ENCODE measurements at regions of chr7 and their contacts with region 1.

Region 1: DNA sequence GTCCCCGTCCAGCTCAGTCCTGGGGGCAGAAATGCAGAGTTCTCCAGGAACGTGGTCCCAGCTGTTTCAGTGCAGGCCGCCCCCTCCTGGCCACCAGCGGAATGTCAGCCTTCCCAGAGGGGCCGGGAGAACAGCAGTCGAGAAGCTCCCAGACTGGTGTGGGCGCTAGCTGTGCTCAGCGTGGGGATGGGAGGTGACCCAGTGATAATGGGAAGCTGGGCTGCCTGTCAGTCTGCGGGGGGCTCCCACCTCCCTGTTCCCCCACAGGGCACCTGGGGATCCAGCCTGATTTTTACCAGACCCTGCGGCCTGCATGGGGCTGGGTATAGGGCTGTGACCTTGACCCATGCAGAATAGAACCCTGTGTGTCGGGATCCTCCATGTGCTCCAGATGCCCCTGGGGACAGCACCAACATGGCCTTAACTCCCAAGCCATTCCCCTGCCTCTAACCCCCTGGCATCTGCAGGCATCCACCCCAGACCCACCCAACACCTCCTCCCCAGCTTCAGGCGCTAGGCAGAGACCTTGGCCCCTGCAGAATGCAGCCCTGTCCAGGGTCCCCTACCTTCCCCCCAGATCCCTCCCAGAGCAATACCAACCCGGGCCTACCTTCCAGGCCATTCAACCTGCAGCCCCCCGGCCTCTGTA is 946 bp upstream of the ELN start:
- DNase-seq: peak; percentile 54 to 75
- ATAC-seq: peak; percentile 60 to 88
- H3K4me3 ChIP-seq: no peak overlapping the region
- H3K27ac ChIP-seq: peak overlapping the region; percentile 36 to 46; a peak in 2 of 6 replicates
- H3K4me1 ChIP-seq: peaks cover 40% of the 10 kb centered on the region
- CTCF ChIP-seq: peak; percentile 78
- EP300 ChIP-seq: no peak
- POLR2A ChIP-seq: no peak
- RAD21 ChIP-seq: peak; percentile 77 to 81

Region 2: GRCh38 chr7:73312831-73313526 is 714.0 kb before region 1 on chr7:
- CTCF ChIA-PET with region 1: no interaction called
- POLR2A ChIA-PET with region 1: no interaction called
- DNase-seq: no peak
- ATAC-seq: no peak
- H3K4me3 ChIP-seq: no peak overlapping the region
- H3K27ac ChIP-seq: no peak overlapping the region
- H3K4me1 ChIP-seq: peaks cover 6% of the 10 kb centered on the region; the same call in 1 of the 3 replicates
- CTCF ChIP-seq: no peak
- EP300 ChIP-seq: no peak
- POLR2A ChIP-seq: no peak
- RAD21 ChIP-seq: no peak

Region 3: DNA sequence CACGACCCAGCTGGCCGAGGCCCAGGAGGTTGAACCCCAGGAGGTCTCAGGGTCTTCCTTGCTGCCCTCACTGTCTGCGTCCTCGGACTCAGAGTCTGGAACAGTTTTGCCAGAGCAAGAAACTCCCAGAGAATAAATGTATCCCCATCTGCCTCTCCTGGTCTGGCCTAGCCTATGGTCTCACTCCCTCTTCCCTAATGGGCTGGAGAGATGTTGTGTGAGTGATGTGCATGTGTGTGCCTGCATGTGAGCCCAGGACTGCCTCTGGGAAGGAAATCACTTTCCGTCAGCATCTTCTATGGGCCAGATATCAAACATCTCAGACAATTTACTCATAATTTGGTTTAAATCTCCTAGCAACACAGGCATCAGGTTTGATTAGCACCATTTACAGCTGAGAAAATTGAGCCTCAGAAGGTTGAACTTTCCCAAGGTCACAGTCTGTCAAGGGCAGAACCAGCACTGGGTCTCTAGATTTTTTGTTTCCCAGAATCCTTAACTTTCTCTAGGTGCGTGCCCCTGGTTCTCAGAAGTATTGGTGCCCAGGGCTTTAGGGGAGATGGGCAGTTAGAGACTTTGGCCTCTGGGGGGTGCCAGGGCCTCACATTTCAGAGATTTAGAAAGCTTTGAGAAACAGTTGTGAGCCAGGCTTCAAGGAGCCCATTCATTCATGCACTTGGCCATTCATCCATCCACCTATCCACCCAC is 161.1 kb before region 1 on chr7:
- CTCF ChIA-PET with region 1: interaction called, 94 read pairs
- POLR2A ChIA-PET with region 1: no interaction called
- DNase-seq: peak; percentile 58 to 63
- ATAC-seq: peak; percentile 76 to 86; a peak in 4 of 6 replicates
- H3K4me3 ChIP-seq: no peak overlapping the region
- H3K27ac ChIP-seq: no peak overlapping the region
- H3K4me1 ChIP-seq: peaks cover 10% of the 10 kb centered on the region; the same call in 2 of the 3 replicates
- CTCF ChIP-seq: peak; percentile 81
- EP300 ChIP-seq: no peak
- POLR2A ChIP-seq: no peak
- RAD21 ChIP-seq: peak; percentile 88 to 91

Region 4: GRCh38 chr7:73885975-73886798 is 140.8 kb before region 1 on chr7:
- CTCF ChIA-PET with region 1: interaction called, 25 read pairs
- POLR2A ChIA-PET with region 1: no interaction called
- DNase-seq: no peak
- ATAC-seq: no peak; a peak in 1 of 6 replicates
- H3K4me3 ChIP-seq: no peak overlapping the region
- H3K27ac ChIP-seq: no peak overlapping the region
- H3K4me1 ChIP-seq: peaks cover under 1% of the 10 kb centered on the region; the same call in 2 of the 3 replicates
- CTCF ChIP-seq: no peak
- EP300 ChIP-seq: no peak
- POLR2A ChIP-seq: no peak
- RAD21 ChIP-seq: no peak

Region 5: GRCh38 chr7:73971704-73972341 is 55.2 kb before region 1 on chr7:
- CTCF ChIA-PET with region 1: interaction called, 14 read pairs
- POLR2A ChIA-PET with region 1: no interaction called
- DNase-seq: peak in 1 of 2 experiments; percentile 16
- ATAC-seq: peak; percentile 47 to 61; a peak in 5 of 6 replicates
- H3K4me3 ChIP-seq: no peak overlapping the region
- H3K27ac ChIP-seq: no peak overlapping the region
- H3K4me1 ChIP-seq: no peaks in the 10 kb centered on the region
- CTCF ChIP-seq: no peak; the same call in 2 of the 3 replicates
- EP300 ChIP-seq: no peak
- POLR2A ChIP-seq: no peak
- RAD21 ChIP-seq: 0 out of 5 replicates have a peak, but pooled peaks of 1 of the 2 experiments have one; percentile 13

Region 6: DNA sequence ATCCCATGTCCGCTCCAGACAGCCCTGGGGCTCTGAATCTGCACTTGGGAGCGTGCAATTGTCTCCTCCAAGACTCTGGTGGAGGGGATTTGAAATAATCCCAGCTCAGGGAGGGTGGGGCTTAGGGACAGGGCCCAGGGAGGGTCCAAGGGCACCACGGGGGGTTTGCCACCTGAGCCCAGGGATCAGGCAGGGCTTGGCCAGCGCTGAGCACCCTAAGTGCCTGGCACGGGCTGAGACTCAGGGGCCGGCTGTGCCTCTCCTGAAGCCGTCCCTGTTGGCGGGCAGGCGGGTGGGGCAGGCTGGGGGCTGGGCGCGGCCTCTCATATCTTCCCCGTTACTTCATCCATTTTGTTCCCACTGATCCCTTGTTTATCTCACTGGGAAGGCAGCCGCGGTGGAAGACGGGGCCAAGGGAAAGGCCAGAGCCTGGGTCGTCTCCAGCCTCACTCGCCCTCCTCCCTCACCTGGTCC is 40.8 kb before region 1 on chr7:
- CTCF ChIA-PET with region 1: interaction called, 10 read pairs
- POLR2A ChIA-PET with region 1: no interaction called
- DNase-seq: no peak
- ATAC-seq: peak in 1 of 2 experiments; percentile 15; a peak in 2 of 6 replicates
- H3K4me3 ChIP-seq: no peak overlapping the region
- H3K27ac ChIP-seq: 0 out of 6 replicates have a peak overlapping the region, but pooled peaks of 1 of the 2 experiments have one; percentile 26
- H3K4me1 ChIP-seq: no peaks in the 10 kb centered on the region
- CTCF ChIP-seq: no peak
- EP300 ChIP-seq: no peak
- POLR2A ChIP-seq: no peak
- RAD21 ChIP-seq: no peak

Region 7: GRCh38 chr7:74012842-74013249 is 14.2 kb before region 1 on chr7:
- CTCF ChIA-PET with region 1: interaction called, 57 read pairs
- POLR2A ChIA-PET with region 1: no interaction called
- DNase-seq: no peak
- ATAC-seq: no peak
- H3K4me3 ChIP-seq: no peak overlapping the region
- H3K27ac ChIP-seq: no peak overlapping the region
- H3K4me1 ChIP-seq: no peaks in the 10 kb centered on the region
- CTCF ChIP-seq: no peak
- EP300 ChIP-seq: no peak
- POLR2A ChIP-seq: no peak
- RAD21 ChIP-seq: no peak

Region 8: GRCh38 chr7:74044951-74045350 is 17.9 kb after region 1 on chr7:
- CTCF ChIA-PET with region 1: interaction called, 93 read pairs
- POLR2A ChIA-PET with region 1: no interaction called
- DNase-seq: no peak
- ATAC-seq: peak in 1 of 2 experiments; percentile 14; a peak in 2 of 6 replicates
- H3K4me3 ChIP-seq: no peak overlapping the region
- H3K27ac ChIP-seq: no peak overlapping the region
- H3K4me1 ChIP-seq: no peaks in the 10 kb centered on the region
- CTCF ChIP-seq: no peak
- EP300 ChIP-seq: no peak
- POLR2A ChIP-seq: no peak
- RAD21 ChIP-seq: no peak

Region 9: GRCh38 chr7:74101061-74101681 is 74.1 kb after region 1 on chr7:
- CTCF ChIA-PET with region 1: no interaction called
- POLR2A ChIA-PET with region 1: no interaction called
- DNase-seq: no peak
- ATAC-seq: no peak
- H3K4me3 ChIP-seq: no peak overlapping the region
- H3K27ac ChIP-seq: no peak overlapping the region
- H3K4me1 ChIP-seq: no peaks in the 10 kb centered on the region
- CTCF ChIP-seq: no peak
- EP300 ChIP-seq: no peak
- POLR2A ChIP-seq: no peak
- RAD21 ChIP-seq: no peak

Region 10: GRCh38 chr7:74489997-74490945 is 463.2 kb after region 1 on chr7:
- CTCF ChIA-PET with region 1: no interaction called
- POLR2A ChIA-PET with region 1: no interaction called
- DNase-seq: no peak
- ATAC-seq: peak; percentile 30 to 41; a peak in 3 of 6 replicates
- H3K4me3 ChIP-seq: no peak overlapping the region
- H3K27ac ChIP-seq: peak overlapping the region in 1 of 2 experiments; percentile 58; a peak in 3 of 6 replicates
- H3K4me1 ChIP-seq: peaks cover 8% of the 10 kb centered on the region; the same call in 2 of the 3 replicates
- CTCF ChIP-seq: no peak
- EP300 ChIP-seq: no peak
- POLR2A ChIP-seq: no peak
- RAD21 ChIP-seq: no peak